ENCODE measurements at regions of chr1 and their contacts with region 1.

Region 1: GRCh38 chr1:154955718-154956543 is at the start of gene PBXIP1:
- DNase-seq: peak in 1 of 2 donors; percentile 89
- H3K4me3 ChIP-seq: peak within 1 kb of the TSS; percentile 52 to 64 (median 55)
- H3K27ac ChIP-seq: peak within 1 kb of the TSS; percentile 76 to 77
- H3K4me1 ChIP-seq: peaks cover 0 to 27% of the 10 kb centered on the region in 2 donors
- H3K27me3 ChIP-seq: no peaks in the 10 kb centered on the region
- CTCF ChIP-seq: peak in 2 of 3 donors; percentile 7 to 12
- POLR2A ChIP-seq: no peak
- total RNA-seq, gene PBXIP1: 79.3 to 156 (median 105) TPM

Region 2: DNA sequence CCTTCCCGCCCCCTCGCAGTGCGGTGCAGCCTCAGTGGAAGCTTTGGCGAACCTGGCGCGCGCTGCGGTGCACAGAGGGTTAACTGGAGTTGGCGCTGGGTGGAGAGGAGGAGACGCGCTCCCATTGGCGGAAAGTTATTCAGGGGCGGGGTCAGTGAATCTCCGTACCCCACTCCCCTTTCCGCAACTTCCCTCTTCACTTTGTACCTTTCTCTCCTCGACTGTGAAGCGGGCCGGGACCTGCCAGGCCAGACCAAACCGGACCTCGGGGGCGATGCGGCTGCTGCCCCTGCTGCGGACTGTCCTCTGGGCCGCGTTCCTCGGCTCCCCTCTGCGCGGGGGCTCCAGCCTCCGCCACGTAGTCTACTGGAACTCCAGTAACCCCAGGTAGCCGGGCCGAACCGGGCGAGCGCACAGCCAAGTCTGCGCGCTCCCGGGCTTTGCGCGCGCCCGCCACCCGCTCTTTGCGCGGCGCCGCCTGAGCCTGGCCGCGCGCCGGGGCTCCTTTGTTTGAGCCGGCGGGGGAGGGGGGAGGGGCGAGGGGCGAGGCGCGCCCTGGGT is 107.7 kb after region 1 on chr1 and contains the start of gene EFNA4:
- intact Hi-C with region 1: loop called (anchors 10 kb)
- DNase-seq: peak; percentile 82 to 89
- H3K4me3 ChIP-seq: peak within 1 kb of the TSS; percentile 68 to 90 (median 81)
- H3K27ac ChIP-seq: peak within 1 kb of the TSS; percentile 85 to 92
- H3K4me1 ChIP-seq: peaks cover 14 to 15% of the 10 kb centered on the region in 2 donors
- H3K27me3 ChIP-seq: no peaks in the 10 kb centered on the region
- CTCF ChIP-seq: no peak
- POLR2A ChIP-seq: no peak
- total RNA-seq, gene EFNA4: 4.8 to 26.6 (median 23.9) TPM

Region 3: GRCh38 chr1:155562581-155563376 is 606.8 kb after region 1 on chr1 and contains the start of gene ASH1L:
- intact Hi-C with region 1: no loop called
- DNase-seq: peak; percentile 88 to 94
- H3K4me3 ChIP-seq: peak within 1 kb of the TSS; percentile 75 to 99 (median 81)
- H3K27ac ChIP-seq: peak within 1 kb of the TSS; percentile 95 to 100
- H3K4me1 ChIP-seq: peaks cover 0 to 8% of the 10 kb centered on the region in 2 donors
- H3K27me3 ChIP-seq: no peaks in the 10 kb centered on the region
- CTCF ChIP-seq: peak in 2 of 3 donors; percentile 28 to 42
- POLR2A ChIP-seq: peak; percentile 83
- total RNA-seq, gene ASH1L: 83.2 to 103 (median 85.6) TPM